Caco-2 (cell line): ENCODE measurements at regions of chr5 and their contacts with region 1.

Region 1: GRCh38 chr5:81851481-81852178 is 100.7 kb upstream of the SSBP2 start:
- DNase-seq: peak; percentile 92 to 95
- H3K4me3 ChIP-seq: peak overlapping the region; percentile 35
- H3K4me3 Mint-ChIP-seq: peak overlapping the region; percentile 86
- H3K27ac Mint-ChIP-seq: peak overlapping the region; percentile 95
- H3K4me1 ChIP-seq: peaks cover 8% of the 10 kb centered on the region
- H3K4me1 Mint-ChIP-seq: peaks cover 11% of the 10 kb centered on the region
- H3K27me3 ChIP-seq: no peaks in the 10 kb centered on the region
- H3K27me3 Mint-ChIP-seq: no peaks in the 10 kb centered on the region
- CTCF ChIP-seq: no peak

Region 2: GRCh38 chr5:81787474-81788242 is 64.0 kb before region 1 on chr5:
- CTCF ChIA-PET with region 1: no interaction called
- POLR2A ChIA-PET with region 1: no interaction called
- intact Hi-C with region 1: loop called (anchors 1 kb)
- DNase-seq: no peak
- H3K4me3 ChIP-seq: no peak overlapping the region
- H3K4me3 Mint-ChIP-seq: no peak overlapping the region
- H3K27ac Mint-ChIP-seq: no peak overlapping the region
- H3K4me1 ChIP-seq: no peaks in the 10 kb centered on the region
- H3K4me1 Mint-ChIP-seq: no peaks in the 10 kb centered on the region
- H3K27me3 ChIP-seq: no peaks in the 10 kb centered on the region
- H3K27me3 Mint-ChIP-seq: no peaks in the 10 kb centered on the region
- CTCF ChIP-seq: no peak

Region 3: DNA sequence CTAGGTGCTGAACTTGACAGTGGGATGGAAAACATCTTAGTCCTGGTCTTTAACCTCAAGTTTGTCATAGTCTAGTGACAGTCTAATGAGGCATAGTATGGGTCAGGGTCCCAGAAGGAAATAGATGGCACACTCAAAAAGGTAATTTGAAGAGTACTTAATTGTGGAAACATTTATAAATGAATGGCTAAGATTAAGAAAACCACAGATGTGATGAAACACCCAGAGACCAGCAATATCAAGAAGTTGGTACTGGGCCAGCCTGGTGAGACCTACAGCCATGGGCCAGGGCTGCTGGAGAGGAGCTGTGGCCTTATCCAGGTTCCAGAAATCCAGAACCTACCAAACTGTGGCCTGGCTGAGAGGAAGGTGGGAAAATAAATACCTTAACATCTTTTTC is 26.7 kb after region 1 on chr5:
- CTCF ChIA-PET with region 1: no interaction called
- POLR2A ChIA-PET with region 1: no interaction called
- intact Hi-C with region 1: no loop called
- DNase-seq: no peak
- H3K4me3 ChIP-seq: no peak overlapping the region
- H3K4me3 Mint-ChIP-seq: no peak overlapping the region
- H3K27ac Mint-ChIP-seq: no peak overlapping the region
- H3K4me1 ChIP-seq: no peaks in the 10 kb centered on the region
- H3K4me1 Mint-ChIP-seq: no peaks in the 10 kb centered on the region
- H3K27me3 ChIP-seq: peaks cover 2% of the 10 kb centered on the region
- H3K27me3 Mint-ChIP-seq: peaks cover 21% of the 10 kb centered on the region
- CTCF ChIP-seq: no peak

Region 4: DNA sequence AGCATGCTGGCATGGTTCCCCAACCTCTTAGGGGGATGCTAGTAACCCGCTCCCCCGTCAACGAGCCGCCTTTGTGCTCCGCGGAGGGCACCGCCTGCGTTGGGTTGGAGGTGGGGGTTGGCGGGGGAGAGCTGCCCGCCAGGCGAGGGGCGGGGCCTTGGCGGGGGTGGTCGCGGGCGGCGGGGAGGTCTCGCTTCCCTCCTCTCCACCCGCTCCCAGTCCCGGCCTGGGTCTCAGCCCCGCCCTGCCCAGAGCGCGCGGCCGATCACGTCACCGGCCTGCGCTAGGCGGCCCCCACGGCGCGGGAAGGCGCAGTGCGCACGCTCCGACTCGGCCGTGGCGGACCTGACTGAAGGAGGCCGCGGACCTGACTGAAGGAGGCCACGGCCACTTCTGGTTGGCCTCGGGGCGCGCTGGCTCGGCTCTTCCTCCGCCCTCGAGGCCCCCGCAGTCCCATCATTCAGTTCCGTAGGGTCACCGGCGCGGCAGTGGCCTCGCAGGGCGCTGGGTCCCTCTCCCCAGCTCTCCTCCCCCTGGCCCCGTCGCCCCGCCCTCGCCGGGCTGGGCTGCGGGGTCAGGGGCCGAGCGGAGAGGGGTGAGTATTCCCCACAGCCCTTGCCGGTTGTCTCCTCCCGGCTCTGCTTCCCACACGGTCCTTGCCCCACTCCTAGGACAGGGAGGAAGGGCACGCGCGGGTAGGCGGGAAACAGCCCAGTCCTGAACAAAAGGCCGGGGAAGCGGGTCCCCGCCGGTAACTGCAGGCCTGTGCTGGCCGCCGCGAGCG is 120.3 kb after region 1 on chr5 and contains the start of gene ATG10:
- CTCF ChIA-PET with region 1: no interaction called
- POLR2A ChIA-PET with region 1: interaction called, 4 read pairs
- intact Hi-C with region 1: loop called (anchors 5 kb)
- DNase-seq: peak; percentile 90 to 94
- H3K4me3 ChIP-seq: peak within 1 kb of the TSS; percentile 80
- H3K4me3 Mint-ChIP-seq: peak within 1 kb of the TSS; percentile 84
- H3K27ac Mint-ChIP-seq: peak within 1 kb of the TSS; percentile 81
- H3K4me1 ChIP-seq: peaks cover 3% of the 10 kb centered on the region; the same call in 1 of the 2 replicates
- H3K4me1 Mint-ChIP-seq: peaks cover 13% of the 10 kb centered on the region
- H3K27me3 ChIP-seq: no peaks in the 10 kb centered on the region
- H3K27me3 Mint-ChIP-seq: no peaks in the 10 kb centered on the region
- CTCF ChIP-seq: no peak
- total RNA-seq, gene ATG10: 5.4 and 5.8 TPM in 2 replicates